Ovary (tissue), 10 donors: ENCODE measurements at regions of chr18 and their contacts with region 1.

Region 1: GRCh38 chr18:79644006-79644665 is 35.5 kb upstream of the CTDP1 start:
- DNase-seq: peak; percentile 54 to 77 (median 73)
- H3K4me3 ChIP-seq: no peak overlapping the region
- H3K27ac ChIP-seq: no peak overlapping the region
- H3K4me1 ChIP-seq: no peaks in the 10 kb centered on the region
- H3K27me3 ChIP-seq: no peaks in the 10 kb centered on the region
- CTCF ChIP-seq: peak; percentile 88 to 90 (median 89)
- EP300 ChIP-seq: no peak
- POLR2A ChIP-seq: peak; percentile 19

Region 2: DNA sequence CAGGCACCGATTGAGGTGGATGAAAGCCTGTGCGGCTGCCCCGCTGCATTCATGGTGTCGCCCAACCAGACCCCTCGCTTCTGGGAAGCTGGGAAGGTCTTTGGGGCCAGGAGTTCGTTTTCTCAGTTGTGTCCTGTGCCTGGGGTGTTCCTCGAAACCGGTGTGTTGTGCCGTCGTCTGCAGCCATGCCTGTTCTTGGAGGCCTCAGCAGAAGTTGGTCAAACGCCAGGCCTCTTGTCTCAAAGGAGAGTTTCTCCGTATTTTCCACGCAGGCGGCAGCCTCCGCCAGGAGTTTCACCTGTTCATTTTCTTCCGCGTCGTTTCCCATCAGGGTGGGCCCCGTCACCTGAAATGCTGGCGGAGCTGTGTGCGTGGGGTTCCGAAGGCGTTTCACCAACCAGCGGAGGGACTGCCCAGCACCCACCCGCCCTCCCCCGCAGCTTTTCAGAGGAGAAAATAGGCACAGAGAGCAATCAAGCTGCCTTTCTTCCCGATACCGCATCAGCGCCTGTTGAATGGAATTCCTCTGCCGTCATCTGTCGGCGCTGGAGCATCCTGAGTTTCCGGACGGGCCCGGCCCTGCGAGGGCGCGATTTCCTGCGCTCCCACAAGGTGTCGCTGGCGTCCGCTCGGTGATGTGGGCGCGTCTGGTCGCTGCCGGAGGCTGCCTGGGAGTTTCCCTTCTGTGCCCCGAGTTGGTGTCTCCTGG is 265.4 kb before region 1 on chr18:
- intact Hi-C with region 1: loop called (anchors 2 to 5 kb)
- DNase-seq: peak; percentile 71 to 89 (median 82)
- H3K4me3 ChIP-seq: no peak overlapping the region
- H3K27ac ChIP-seq: no peak overlapping the region
- H3K4me1 ChIP-seq: peaks cover 2% of the 10 kb centered on the region
- H3K27me3 ChIP-seq: no peaks in the 10 kb centered on the region
- CTCF ChIP-seq: peak; percentile 90 to 96 (median 91)
- EP300 ChIP-seq: no peak
- POLR2A ChIP-seq: peak; percentile 41

Region 3: GRCh38 chr18:79484661-79485621 is 159.2 kb before region 1 on chr18:
- intact Hi-C with region 1: loop called in 1 of 4 experiments (anchors 10 kb)
- DNase-seq: peak in 3 of 5 donors; percentile 29 to 60 (median 46)
- H3K4me3 ChIP-seq: no peak overlapping the region
- H3K27ac ChIP-seq: no peak overlapping the region
- H3K4me1 ChIP-seq: peaks cover 9% of the 10 kb centered on the region
- H3K27me3 ChIP-seq: no peaks in the 10 kb centered on the region
- CTCF ChIP-seq: no peak
- EP300 ChIP-seq: no peak
- POLR2A ChIP-seq: no peak

Region 4: DNA sequence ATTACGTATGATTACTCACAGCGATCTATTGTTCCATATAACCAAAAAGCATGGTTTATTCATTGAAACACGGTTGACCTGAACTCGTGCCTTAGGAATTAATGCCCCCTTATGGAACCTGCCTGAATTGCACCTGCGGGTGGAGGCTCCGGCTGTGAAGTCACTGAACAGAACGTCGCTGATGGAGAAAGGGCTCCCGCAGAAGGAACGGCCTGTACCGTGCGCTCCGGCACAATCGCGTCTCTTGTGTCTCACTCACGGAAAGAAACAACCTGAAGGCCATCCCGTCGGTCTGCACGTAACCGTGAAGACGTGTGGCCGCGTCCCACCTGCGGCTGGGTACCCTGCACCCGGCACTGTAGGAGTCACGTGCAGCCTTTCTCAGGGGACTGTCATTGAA is 115.3 kb before region 1 on chr18:
- intact Hi-C with region 1: loop called in 1 of 4 experiments (anchors 5 kb)
- DNase-seq: peak; percentile 53 to 76 (median 71)
- H3K4me3 ChIP-seq: no peak overlapping the region
- H3K27ac ChIP-seq: no peak overlapping the region
- H3K4me1 ChIP-seq: no peaks in the 10 kb centered on the region
- H3K27me3 ChIP-seq: no peaks in the 10 kb centered on the region
- CTCF ChIP-seq: peak; percentile 65 to 82 (median 71)
- EP300 ChIP-seq: no peak
- POLR2A ChIP-seq: no peak